Activated CD4-positive, alpha-beta memory T cell treated with anti-CD3 and anti-CD28 coated beads, Interleukin-2, amount 10 ng/mL, durations not matched to agents 7 days and 5 days (primary cell): ENCODE measurements at regions of chr21 and their contacts with region 1.

Region 1: DNA sequence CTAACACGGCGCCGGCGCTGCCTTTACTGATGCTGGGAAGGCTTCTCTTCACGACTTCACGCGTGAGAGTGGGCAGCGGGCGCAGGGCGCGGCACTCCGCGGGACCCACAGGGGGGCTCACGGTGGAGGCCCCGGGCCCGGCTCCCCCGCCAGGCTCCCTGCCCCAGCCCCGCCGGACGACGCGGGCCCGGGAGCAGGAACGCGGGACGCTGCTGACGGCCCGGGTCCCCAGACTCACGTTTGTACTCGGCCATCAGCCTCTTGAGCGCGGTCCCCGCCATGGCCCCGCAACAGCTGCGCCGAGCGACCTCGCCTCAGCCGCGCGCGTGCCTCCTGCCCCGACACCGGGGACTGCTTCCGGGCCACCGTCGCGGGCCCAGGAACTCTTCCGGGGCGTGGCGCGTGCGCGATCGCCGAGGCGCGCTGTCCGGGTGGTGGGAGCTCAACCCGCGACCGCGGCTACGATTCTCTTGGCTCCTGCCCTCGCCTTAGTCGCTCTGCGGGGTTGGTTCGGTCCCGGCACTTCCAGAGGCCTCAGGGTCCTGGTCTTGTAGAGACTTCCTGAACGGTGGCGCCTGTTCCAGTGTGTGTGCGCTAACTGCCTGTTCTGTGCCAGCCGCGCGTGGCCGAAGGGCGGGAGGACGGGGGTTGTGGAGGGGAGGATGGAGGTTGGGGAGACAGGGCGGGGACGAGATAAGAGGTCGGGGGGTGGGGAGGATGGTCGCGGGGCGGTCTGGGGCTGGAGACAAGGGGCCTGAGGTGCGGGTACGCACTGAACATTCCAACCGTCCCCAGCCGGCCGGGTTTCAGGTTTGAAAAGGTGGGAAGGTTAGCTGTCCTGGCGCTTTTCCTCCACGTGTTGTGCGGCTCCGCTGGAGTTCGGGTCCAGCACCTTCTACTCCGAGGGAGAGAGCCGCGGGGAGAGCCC is at the start of gene UBE2G2:
- DNase-seq: peak; percentile 87
- H3K4me3 Mint-ChIP-seq: peak within 1 kb of the TSS; percentile 88
- H3K27ac Mint-ChIP-seq: peak within 1 kb of the TSS; percentile 80
- H3K4me1 Mint-ChIP-seq: peaks cover 43% of the 10 kb centered on the region
- H3K27me3 Mint-ChIP-seq: no peaks in the 10 kb centered on the region
- total RNA-seq, gene UBE2G2: 70.7 to 74.0 TPM

Region 2: DNA sequence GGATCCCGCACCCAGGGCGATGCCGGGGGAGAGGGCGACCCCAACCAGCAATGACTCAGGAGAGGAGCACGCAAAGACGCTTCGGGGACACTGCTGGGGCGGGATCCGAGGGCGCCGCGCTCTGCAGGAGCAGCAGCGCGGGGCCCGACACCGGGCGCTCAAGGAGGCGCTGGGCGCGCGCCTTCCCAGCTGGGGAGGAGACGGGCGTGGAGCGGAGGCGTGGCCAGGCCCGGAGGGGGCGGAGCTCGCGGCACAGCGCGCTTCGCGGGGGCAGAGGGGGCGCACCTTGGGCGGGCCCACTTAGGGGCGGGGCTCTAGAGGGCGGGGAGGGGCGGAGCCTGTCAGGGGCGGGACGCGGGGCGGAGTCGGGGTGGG is 15.8 kb after region 1 on chr21:
- CTCF ChIA-PET with region 1: interaction called, 18 read pairs
- POLR2A ChIA-PET with region 1: interaction called, 16 read pairs
- DNase-seq: peak; percentile 95
- H3K4me3 Mint-ChIP-seq: peak overlapping the region; percentile 68
- H3K27ac Mint-ChIP-seq: no peak overlapping the region
- H3K4me1 Mint-ChIP-seq: peaks cover 23% of the 10 kb centered on the region
- H3K27me3 Mint-ChIP-seq: peaks cover 5% of the 10 kb centered on the region